B cell (primary cell): ENCODE measurements at regions of chr3 and their contacts with region 1.

Region 1: DNA sequence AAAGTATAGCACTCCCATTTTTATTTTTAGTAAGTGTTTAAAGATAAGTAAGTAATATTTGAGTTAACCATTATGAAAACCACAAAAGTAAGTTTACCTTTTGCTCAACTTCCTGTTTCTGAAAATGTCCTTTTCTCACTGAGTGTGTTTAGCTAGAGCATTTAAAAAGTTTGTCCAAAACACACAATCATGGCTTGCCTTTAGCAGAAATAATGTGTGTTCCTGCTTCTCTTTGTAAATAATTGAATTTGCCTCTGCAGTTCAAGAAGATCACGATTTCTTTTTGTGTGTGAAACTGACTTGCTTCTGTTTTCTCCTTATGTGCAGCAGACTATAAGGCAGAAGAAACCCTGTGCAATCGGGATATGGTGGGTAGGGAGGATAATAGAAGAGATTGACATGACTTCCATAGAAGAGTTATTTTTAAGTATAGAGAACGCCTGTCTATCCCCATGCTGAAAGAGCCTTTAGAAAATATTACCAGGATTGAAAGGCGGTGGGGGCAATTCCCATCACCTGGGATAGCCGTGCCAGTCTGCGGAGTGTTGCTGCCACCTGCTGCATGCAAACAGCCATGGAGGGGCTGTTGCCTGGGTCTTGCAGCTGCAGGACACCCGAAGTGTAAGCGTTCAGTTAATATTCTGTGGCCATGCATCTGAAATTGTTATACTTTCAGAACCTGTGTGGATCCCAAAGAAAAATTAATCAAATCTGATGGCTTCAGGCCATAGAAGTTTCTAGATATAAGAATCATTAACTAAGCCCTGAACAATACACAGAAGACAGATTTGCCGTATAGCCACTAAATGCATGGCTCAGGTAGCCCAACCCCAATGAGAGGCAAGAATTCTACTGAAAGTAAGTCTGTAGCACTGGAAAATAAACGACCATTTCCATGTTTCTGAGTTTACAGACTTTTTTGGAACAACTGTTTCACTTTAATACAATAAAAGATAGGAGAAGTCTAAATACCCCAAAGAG is 2.4 kb upstream of the CD96 start:
- DNase-seq: peak; percentile 77
- ATAC-seq: peak; percentile 85
- H3K4me3 ChIP-seq: peak overlapping the region; percentile 12 to 64 (median 49)
- H3K4me3 Mint-ChIP-seq: peak overlapping the region; percentile 75
- H3K27ac ChIP-seq: no peak overlapping the region
- H3K27ac Mint-ChIP-seq: peak overlapping the region; percentile 28
- H3K4me1 ChIP-seq: peaks cover 37 to 51% of the 10 kb centered on the region in 2 donors
- H3K4me1 Mint-ChIP-seq: peaks cover 62% of the 10 kb centered on the region
- H3K27me3 ChIP-seq: no peaks in the 10 kb centered on the region
- H3K27me3 Mint-ChIP-seq: no peaks in the 10 kb centered on the region
- CTCF ChIP-seq: peak; percentile 79

Region 2: GRCh38 chr3:110736332-110736731 is 803.3 kb before region 1 on chr3:
- CTCF ChIA-PET with region 1: no interaction called
- POLR2A ChIA-PET with region 1: no interaction called
- intact Hi-C with region 1: loop called (anchors 5 kb)
- DNase-seq: peak; percentile 61
- ATAC-seq: peak; percentile 80
- H3K4me3 ChIP-seq: no peak overlapping the region
- H3K4me3 Mint-ChIP-seq: no peak overlapping the region
- H3K27ac ChIP-seq: no peak overlapping the region
- H3K27ac Mint-ChIP-seq: no peak overlapping the region
- H3K4me1 ChIP-seq: peaks cover 12% of the 10 kb centered on the region in 2 donors
- H3K4me1 Mint-ChIP-seq: peaks cover 13% of the 10 kb centered on the region
- H3K27me3 ChIP-seq: peaks cover 0 to 12% (median 2%) of the 10 kb centered on the region in 4 experiments
- H3K27me3 Mint-ChIP-seq: peaks cover 13% of the 10 kb centered on the region
- CTCF ChIP-seq: no peak

Region 3: DNA sequence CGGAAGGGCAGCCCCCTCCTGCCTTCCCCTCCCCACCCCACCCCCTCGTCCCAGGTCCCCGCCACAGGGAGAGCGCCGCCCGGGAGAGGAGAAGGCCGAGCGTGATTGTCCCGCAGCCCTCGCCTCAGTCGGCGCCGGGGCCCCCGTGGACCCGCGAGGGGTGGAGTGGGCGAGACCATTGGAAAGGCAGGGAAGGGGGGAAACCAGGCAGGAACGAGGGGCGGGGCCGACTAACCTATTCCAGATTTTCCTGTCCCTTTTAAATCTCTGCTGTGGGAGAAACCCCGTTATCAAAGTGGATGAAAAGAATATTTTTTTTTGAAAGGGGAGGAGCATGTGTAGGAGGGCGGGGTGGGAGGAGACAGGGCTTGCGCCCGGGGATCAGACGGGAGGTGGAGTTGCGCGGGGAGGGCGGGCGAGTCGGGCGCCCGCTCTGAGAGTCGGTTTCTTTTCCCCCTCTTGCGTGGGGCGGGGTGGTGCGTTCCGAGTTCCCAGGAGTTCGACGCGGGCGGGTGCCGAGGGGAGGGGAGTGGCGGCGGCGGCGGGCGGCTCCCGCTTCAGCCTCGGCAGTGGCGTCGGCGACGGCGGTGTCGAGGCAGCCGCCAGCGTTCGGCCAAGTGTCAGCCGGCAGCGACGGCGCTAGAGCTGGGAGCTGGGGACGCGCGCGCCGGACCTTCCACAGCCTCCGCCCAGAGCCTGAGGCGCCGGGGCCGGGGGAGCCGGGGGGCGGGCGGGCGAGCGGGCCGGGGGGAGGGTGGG is 468.2 kb before region 1 on chr3 and contains the start of gene NECTIN3:
- CTCF ChIA-PET with region 1: no interaction called
- POLR2A ChIA-PET with region 1: no interaction called
- intact Hi-C with region 1: loop called (anchors 5 kb)
- DNase-seq: peak; percentile 86
- ATAC-seq: peak; percentile 88
- H3K4me3 ChIP-seq: peak within 1 kb of the TSS; percentile 35 to 68 (median 52)
- H3K4me3 Mint-ChIP-seq: peak within 1 kb of the TSS; percentile 93
- H3K27ac ChIP-seq: no peak within 1 kb of the TSS
- H3K27ac Mint-ChIP-seq: peak within 1 kb of the TSS; percentile 64
- H3K4me1 ChIP-seq: peaks cover 25 to 27% of the 10 kb centered on the region in 2 donors
- H3K4me1 Mint-ChIP-seq: peaks cover 30% of the 10 kb centered on the region
- H3K27me3 ChIP-seq: peaks cover 0 to 46% (median 39%) of the 10 kb centered on the region in 4 experiments
- H3K27me3 Mint-ChIP-seq: peaks cover 42% of the 10 kb centered on the region
- CTCF ChIP-seq: no peak
- total RNA-seq, gene NECTIN3: 1.9 and 2.9 TPM in 2 replicates